ENCODE measurements at regions of chr3 and their contacts with region 1.

Region 1: GRCh38 chr3:170689893-170690660 is 104.2 kb upstream of the SLC7A14 start:
- DNase-seq: peak; percentile 69 to 79
- ATAC-seq: peak; percentile 71 to 91 (median 80)
- H3K4me3 ChIP-seq: no peak overlapping the region
- H3K27ac ChIP-seq: no peak overlapping the region
- H3K4me1 ChIP-seq: peaks cover 10% of the 10 kb centered on the region
- H3K27me3 ChIP-seq: no peaks in the 10 kb centered on the region
- CTCF ChIP-seq: peak; percentile 59

Region 2: GRCh38 chr3:170321321-170322034 is 368.6 kb before region 1 on chr3:
- intact Hi-C with region 1: loop called in 1 of 2 experiments (anchors 10 kb)
- DNase-seq: no peak
- ATAC-seq: no peak
- H3K4me3 ChIP-seq: no peak overlapping the region
- H3K27ac ChIP-seq: no peak overlapping the region
- H3K4me1 ChIP-seq: no peaks in the 10 kb centered on the region
- H3K27me3 ChIP-seq: no peaks in the 10 kb centered on the region
- CTCF ChIP-seq: no peak

Region 3: GRCh38 chr3:170414202-170414663 is 275.8 kb before region 1 on chr3:
- intact Hi-C with region 1: loop called (anchors 2 to 5 kb)
- DNase-seq: no peak
- ATAC-seq: peak in 3 of 4 donors; percentile 46 to 74 (median 52)
- H3K4me3 ChIP-seq: no peak overlapping the region
- H3K27ac ChIP-seq: no peak overlapping the region
- H3K4me1 ChIP-seq: peaks cover 8% of the 10 kb centered on the region
- H3K27me3 ChIP-seq: peaks cover 0 to 30% (median 7%) of the 10 kb centered on the region in 3 donors
- CTCF ChIP-seq: peak; percentile 83

Region 4: DNA sequence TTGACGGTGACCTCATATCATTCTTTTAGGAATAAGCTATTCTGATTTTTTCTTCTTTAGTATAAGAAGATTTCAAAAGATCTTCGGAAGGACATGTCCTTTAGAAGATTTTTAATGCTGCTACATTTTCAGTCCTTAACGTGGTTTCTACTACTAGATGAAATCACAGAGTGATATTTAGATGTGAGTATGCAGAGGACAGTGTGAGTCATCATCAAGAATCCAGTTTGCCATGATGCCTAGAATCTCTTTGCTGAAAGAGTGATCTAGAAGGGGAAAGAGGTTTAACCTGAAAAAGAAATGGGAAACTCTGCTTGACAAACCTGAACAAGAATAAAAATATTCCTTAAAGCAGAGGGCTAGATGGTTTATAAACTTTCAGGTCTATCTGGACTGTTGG is 147.4 kb before region 1 on chr3:
- intact Hi-C with region 1: loop called in 1 of 2 experiments (anchors 10 kb)
- DNase-seq: no peak
- ATAC-seq: no peak
- H3K4me3 ChIP-seq: no peak overlapping the region
- H3K27ac ChIP-seq: no peak overlapping the region
- H3K4me1 ChIP-seq: no peaks in the 10 kb centered on the region
- H3K27me3 ChIP-seq: peaks cover 0 to 17% (median 0%) of the 10 kb centered on the region in 3 donors
- CTCF ChIP-seq: no peak

Region 5: GRCh38 chr3:170584585-170585007 is 105.5 kb before region 1 on chr3:
- intact Hi-C with region 1: no loop called
- DNase-seq: peak; percentile 68 to 81
- ATAC-seq: peak in 3 of 4 donors; percentile 63 to 76 (median 67)
- H3K4me3 ChIP-seq: no peak overlapping the region
- H3K27ac ChIP-seq: no peak overlapping the region
- H3K4me1 ChIP-seq: no peaks in the 10 kb centered on the region
- H3K27me3 ChIP-seq: peaks cover 0 to 53% (median 11%) of the 10 kb centered on the region in 3 donors
- CTCF ChIP-seq: no peak